ENCODE measurements at regions of chr9 and their contacts with region 1.

Region 1: GRCh38 chr9:86948074-86948929 is 996 bp upstream of the GAS1 start:
- DNase-seq: peak; percentile 75 to 97 (median 84)

Region 2: DNA sequence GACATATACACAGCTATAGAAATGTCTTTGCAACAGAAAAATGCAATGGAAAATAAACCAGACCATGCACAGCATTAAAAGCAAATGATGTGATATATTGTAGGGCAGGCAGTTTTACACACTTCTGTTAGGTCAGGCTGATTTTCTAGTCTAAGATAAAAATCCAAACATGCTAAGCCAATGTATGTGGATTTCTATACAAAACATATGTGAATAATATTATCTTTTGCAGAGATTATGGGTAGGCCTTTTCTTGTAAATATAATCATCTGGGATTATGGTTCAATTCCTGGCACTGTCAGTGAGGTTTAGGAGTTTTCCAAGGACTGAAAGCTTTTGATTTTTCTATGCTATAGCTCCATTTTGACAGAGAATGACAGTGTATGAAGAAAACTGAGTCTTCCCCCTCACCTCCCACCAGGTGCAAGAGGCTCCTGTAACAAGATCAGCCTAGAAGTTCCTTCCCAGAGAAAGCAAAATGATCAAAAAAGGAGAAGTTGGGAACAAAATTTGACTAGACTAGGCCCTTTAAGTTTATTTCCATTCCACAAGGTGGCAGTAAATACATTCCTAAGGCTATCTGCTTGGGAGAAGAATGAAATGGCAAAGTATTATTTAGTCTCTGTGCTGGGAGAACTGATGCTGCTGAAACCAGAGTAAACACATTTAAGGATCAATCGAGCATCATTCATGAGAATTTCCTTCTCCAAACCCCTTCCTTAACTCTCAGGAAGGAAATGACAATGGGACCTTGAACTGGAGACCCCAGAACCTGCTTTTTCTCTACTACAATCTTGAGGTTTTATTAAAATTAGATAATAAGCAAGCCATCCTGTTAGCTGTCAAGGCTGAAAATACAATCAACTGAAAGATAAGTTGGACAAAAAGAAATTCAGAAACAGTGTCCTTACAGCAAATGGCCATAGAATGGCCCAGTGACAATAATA is 461.1 kb before region 1 on chr9:
- intact Hi-C with region 1: loop called (anchors 5 kb)
- DNase-seq: no peak

Region 3: GRCh38 chr9:86614871-86615849 is 333.1 kb before region 1 on chr9:
- intact Hi-C with region 1: loop called (anchors 5 kb)
- DNase-seq: peak in 1 of 10 donors; percentile 16

Region 4: GRCh38 chr9:86721843-86722711 is 226.2 kb before region 1 on chr9:
- intact Hi-C with region 1: no loop called
- DNase-seq: no peak

Region 5: DNA sequence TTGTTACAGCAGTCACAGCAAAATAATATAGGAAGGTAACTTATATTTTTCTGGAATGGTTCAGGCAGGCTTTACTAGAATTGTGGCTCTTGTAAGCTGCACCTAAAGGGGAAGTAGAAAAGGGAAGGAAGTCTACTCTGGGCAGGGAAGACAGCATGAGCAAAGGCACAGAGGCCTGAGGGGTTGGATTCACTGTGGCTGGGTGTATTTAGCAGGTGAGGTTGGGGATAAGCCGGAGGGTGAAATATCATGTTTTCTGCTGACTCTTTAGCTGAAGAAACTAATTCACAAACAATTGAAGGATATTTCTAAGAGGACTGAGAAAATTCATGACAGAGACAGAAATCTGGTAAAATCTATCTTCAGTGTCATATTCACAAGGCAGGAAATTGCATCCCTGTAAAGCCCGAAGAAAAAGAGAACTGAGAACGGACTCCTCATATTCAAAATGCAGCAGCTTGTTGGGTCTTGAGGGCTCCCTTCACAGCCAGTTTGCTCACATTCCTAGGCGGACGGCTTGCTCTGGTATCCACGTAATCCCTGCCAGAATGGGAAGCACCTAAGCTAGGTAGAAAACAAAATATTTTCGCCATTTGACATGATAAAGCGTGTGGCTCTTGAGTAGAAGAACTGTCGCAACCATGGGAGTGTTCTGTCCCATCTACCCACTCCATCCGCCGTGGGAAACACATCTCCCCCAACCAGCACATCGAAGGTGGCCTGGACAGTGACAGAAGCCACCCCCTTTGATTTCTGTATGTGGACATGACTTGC is 184.3 kb before region 1 on chr9:
- intact Hi-C with region 1: no loop called
- DNase-seq: no peak

Region 6: GRCh38 chr9:87148331-87149104 is 200.2 kb after region 1 on chr9:
- intact Hi-C with region 1: loop called (anchors 1 kb)
- DNase-seq: peak; percentile 78 to 98 (median 83)

Region 7: GRCh38 chr9:87324613-87325194 is 376.4 kb after region 1 on chr9:
- intact Hi-C with region 1: loop called (anchors 5 kb)
- DNase-seq: no peak

Region 8: GRCh38 chr9:87725900-87726709 is 777.8 kb after region 1 on chr9 and contains the start of gene CTSL:
- intact Hi-C with region 1: loop called (anchors 5 kb)
- DNase-seq: peak; percentile 90 to 99 (median 94)

Measured in posterior cingulate gyrus (tissue), 11 donors.